ENCODE measurements at regions of chr22 and their contacts with region 1.

Region 1: DNA sequence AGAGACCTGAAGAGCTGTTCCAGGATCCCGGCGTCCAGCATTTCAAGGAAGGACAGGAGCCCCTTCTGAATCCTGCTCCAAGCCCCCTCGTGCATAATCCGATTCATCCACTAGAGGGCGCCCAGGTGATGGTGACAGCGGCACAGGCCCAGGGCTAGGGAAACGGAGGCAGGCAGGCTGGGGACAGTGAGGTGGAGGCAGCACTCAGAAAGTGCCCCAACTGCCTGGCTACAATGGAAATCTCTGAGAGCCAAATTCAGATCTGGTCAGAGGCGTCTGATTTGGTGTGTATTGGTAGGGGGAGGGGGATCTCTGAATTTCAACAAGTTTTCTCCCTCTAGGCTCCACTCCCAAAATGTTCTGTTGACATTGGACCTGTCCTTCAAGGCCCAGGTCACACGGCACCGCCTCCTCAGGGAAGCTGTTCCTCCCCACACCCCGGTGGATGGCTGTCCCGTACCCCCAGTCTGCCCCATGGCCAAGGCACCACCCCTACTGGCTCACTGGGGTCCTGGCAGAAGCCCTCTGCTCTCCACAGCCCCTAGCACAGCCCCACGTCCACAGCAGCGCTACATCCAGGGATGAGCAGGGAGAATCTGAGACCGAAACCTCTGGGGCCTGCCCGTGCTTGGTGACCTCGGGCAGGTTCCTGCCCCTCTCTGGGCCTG is 142.9 kb downstream of the CRYBB2 start:
- DNase-seq: peak; percentile 86
- H3K4me3 ChIP-seq: no peak overlapping the region
- H3K27ac ChIP-seq: peak overlapping the region in 2 of 8 donors; percentile 17 to 30
- H3K4me1 ChIP-seq: peaks cover 13 to 54% (median 33%) of the 10 kb centered on the region in 6 donors
- H3K27me3 ChIP-seq: no peaks in the 10 kb centered on the region
- CTCF ChIP-seq: peak; percentile 70 to 95 (median 84)
- POLR2A ChIP-seq: no peak

Region 2: GRCh38 chr22:25419237-25420113 is 57.1 kb after region 1 on chr22:
- intact Hi-C with region 1: loop called (anchors 10 kb)
- DNase-seq: no peak
- H3K4me3 ChIP-seq: peak overlapping the region in 6 of 8 donors; percentile 6 to 59 (median 23)
- H3K27ac ChIP-seq: peak overlapping the region in 4 of 8 donors; percentile 8 to 56 (median 15)
- H3K4me1 ChIP-seq: peaks cover 10 to 44% (median 37%) of the 10 kb centered on the region in 6 donors
- H3K27me3 ChIP-seq: peaks cover 3 to 55% (median 31%) of the 10 kb centered on the region in 7 donors
- CTCF ChIP-seq: peak in 4 of 11 experiments; percentile 5 to 19 (median 11)
- POLR2A ChIP-seq: no peak

Measured in spleen (tissue), 13 donors.